Activated CD4-positive, alpha-beta T cell treated with anti-CD3 and anti-CD28 coated beads for 36 hours (primary cell): ENCODE measurements at regions of chr17 and their contacts with region 1.

Region 1: DNA sequence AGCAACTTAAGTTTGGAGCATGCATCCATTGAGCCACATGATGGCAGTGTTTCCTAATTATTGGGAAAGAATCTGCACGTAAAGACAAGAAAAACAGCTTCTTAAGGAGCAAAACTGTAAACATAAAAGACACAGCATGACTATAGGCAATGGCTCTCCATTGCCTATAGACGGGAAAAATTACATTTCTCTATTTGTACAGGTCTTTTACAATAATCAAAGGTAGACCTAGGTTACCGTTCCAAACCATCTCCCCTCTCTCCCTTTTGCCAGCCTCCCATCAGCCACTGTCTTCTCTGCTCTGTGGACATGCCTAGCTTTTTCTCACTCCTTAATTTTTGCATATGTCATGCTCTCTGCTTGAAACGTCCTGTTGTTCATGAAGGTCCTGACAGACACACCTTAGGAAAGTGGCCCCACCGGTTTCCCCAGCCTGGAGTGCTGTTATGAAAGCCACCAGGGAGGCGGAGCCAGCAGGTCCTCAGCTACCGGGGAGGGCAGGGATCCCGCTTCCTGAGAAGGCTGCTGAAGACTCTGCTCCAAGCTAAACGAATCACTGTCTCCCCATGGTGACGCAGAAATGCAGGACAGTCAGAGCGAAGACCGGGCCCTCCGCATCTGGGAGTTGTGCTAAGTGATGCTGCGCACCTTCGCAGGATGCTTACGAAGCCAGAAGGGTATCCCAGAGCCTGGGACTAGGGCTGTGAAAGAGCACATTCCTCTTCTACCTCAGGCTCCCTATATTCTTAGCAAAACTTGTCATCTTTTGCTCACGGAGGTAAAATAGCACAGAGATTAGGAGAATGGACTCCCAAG is 2.2 kb upstream of the SLC16A11 start:
- DNase-seq: peak; percentile 66
- ATAC-seq: peak; percentile 34
- H3K4me3 Mint-ChIP-seq: peak overlapping the region; percentile 68
- H3K27ac Mint-ChIP-seq: peak overlapping the region; percentile 59
- H3K4me1 Mint-ChIP-seq: peaks cover 37% of the 10 kb centered on the region
- H3K27me3 Mint-ChIP-seq: peaks cover 3% of the 10 kb centered on the region

Region 2: GRCh38 chr17:6187836-6188235 is 858.3 kb before region 1 on chr17:
- CTCF ChIA-PET with region 1: no interaction called
- POLR2A ChIA-PET with region 1: no interaction called
- intact Hi-C with region 1: no loop called
- DNase-seq: no peak
- ATAC-seq: no peak
- H3K4me3 Mint-ChIP-seq: no peak overlapping the region
- H3K27ac Mint-ChIP-seq: no peak overlapping the region
- H3K4me1 Mint-ChIP-seq: no peaks in the 10 kb centered on the region
- H3K27me3 Mint-ChIP-seq: peaks cover 14% of the 10 kb centered on the region

Region 3: DNA sequence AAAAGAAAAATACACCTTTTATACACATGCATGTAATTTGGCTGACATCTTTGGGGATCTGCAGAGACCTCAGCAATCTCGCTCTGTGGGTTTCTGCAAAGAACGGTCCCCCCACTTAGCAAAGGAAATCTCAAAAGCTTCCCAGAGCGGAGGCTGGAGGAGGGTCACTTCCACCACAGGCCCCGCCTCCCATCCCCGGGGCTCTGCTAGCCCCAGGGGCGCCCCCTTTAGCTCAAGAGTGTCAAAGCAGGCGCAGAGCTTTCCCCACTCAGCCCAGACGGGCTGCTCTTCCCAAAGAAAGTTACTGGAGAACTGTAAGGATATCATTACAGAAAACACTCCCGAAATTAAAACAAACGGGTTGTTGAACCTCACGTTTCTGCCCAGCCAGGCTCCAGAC is 344.4 kb before region 1 on chr17:
- CTCF ChIA-PET with region 1: no interaction called
- POLR2A ChIA-PET with region 1: no interaction called
- intact Hi-C with region 1: no loop called
- DNase-seq: peak; percentile 68
- ATAC-seq: peak; percentile 94
- H3K4me3 Mint-ChIP-seq: no peak overlapping the region
- H3K27ac Mint-ChIP-seq: no peak overlapping the region
- H3K4me1 Mint-ChIP-seq: no peaks in the 10 kb centered on the region
- H3K27me3 Mint-ChIP-seq: peaks cover 2% of the 10 kb centered on the region

Region 4: GRCh38 chr17:7035591-7036368 is 10.3 kb before region 1 on chr17 and contains the start of gene SLC16A13:
- CTCF ChIA-PET with region 1: interaction called, 28 read pairs
- POLR2A ChIA-PET with region 1: interaction called, 3 read pairs
- intact Hi-C with region 1: no loop called
- DNase-seq: peak; percentile 99
- ATAC-seq: peak; percentile 95
- H3K4me3 Mint-ChIP-seq: peak within 1 kb of the TSS; percentile 86
- H3K27ac Mint-ChIP-seq: peak within 1 kb of the TSS; percentile 96
- H3K4me1 Mint-ChIP-seq: peaks cover 45% of the 10 kb centered on the region
- H3K27me3 Mint-ChIP-seq: no peaks in the 10 kb centered on the region
- total RNA-seq, gene SLC16A13: 8.3 to 9.6 TPM

Region 5: DNA sequence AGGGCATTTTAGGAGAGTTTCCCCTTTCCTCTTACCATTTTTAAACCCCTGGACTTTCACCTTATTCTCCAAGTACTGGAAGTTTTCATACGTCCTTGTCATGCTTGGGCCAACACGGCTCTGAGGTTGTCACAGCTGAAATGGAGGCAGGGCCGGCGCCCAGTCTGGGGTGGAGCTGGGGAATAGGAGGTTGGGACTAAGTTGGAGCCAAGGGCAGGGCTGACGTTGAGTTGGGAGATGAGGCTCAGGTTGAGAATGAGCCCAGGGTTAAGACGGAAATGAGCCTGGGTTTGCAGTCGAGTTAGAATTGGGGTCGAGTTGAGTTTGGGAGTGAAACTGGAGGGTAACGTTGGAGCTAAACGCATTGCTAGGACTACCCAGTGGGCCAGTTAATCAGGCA is 32.6 kb after region 1 on chr17:
- CTCF ChIA-PET with region 1: no interaction called
- POLR2A ChIA-PET with region 1: no interaction called
- intact Hi-C with region 1: no loop called
- DNase-seq: no peak
- ATAC-seq: no peak
- H3K4me3 Mint-ChIP-seq: no peak overlapping the region
- H3K27ac Mint-ChIP-seq: peak overlapping the region; percentile 3
- H3K4me1 Mint-ChIP-seq: peaks cover 14% of the 10 kb centered on the region
- H3K27me3 Mint-ChIP-seq: no peaks in the 10 kb centered on the region

Region 6: GRCh38 chr17:7136266-7136877 is 90.3 kb after region 1 on chr17:
- CTCF ChIA-PET with region 1: interaction called, 136 read pairs
- POLR2A ChIA-PET with region 1: interaction called, 15 read pairs
- intact Hi-C with region 1: loop called (anchors 1 kb)
- DNase-seq: peak; percentile 89
- ATAC-seq: no peak
- H3K4me3 Mint-ChIP-seq: no peak overlapping the region
- H3K27ac Mint-ChIP-seq: no peak overlapping the region
- H3K4me1 Mint-ChIP-seq: peaks cover 21% of the 10 kb centered on the region
- H3K27me3 Mint-ChIP-seq: no peaks in the 10 kb centered on the region

Region 7: GRCh38 chr17:7177196-7177953 is 131.3 kb after region 1 on chr17:
- CTCF ChIA-PET with region 1: interaction called, 20 read pairs
- POLR2A ChIA-PET with region 1: no interaction called
- intact Hi-C with region 1: loop called (anchors 1 to 2 kb)
- DNase-seq: peak; percentile 82
- ATAC-seq: peak; percentile 82
- H3K4me3 Mint-ChIP-seq: peak overlapping the region; percentile 56
- H3K27ac Mint-ChIP-seq: no peak overlapping the region
- H3K4me1 Mint-ChIP-seq: peaks cover 11% of the 10 kb centered on the region
- H3K27me3 Mint-ChIP-seq: peaks cover 11% of the 10 kb centered on the region

Region 8: DNA sequence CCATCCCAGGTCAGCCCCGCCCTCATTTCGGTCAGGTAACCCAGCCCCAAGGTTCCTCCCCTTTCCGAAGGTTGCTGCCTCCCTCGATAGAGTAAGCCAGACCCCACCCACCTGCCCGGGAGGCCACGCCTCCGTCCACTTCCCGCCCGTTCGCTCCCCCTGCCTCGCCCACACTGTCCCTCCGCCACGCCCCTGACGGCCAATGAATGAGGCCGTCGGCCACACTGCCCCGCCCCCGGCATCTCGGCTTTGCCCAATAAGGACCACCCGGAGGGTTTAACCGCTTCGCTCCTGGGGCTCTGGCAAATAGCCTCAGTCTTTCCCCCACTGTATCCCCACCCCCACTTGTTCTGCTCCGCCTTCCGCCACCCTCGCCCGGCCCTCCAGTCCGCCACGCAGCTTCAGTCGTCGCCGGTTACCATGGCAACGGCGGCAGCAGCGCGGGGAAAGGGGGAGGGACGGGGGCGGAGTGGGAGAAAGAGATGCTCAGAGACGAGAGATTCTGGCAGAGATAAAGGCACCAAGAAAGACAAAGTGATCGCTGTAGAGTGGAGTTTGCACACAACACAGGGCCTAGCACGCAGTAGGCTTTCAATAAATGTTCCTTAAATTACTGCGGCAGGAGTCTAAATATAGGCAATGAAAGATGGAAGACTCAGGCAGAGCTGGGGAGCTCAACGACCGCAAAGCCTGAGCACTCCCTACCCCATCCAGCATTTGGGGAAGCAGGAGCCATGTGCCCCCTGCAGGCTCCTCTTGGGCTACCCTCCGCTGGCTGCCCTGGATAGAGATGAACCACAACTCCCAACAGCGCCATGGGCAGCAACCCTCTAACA is 168.4 kb after region 1 on chr17:
- CTCF ChIA-PET with region 1: interaction called, 7 read pairs
- POLR2A ChIA-PET with region 1: interaction called, 6 read pairs
- intact Hi-C with region 1: loop called in 1 of 2 experiments (anchors 2 kb)
- DNase-seq: peak; percentile 100
- ATAC-seq: peak; percentile 82
- H3K4me3 Mint-ChIP-seq: peak overlapping the region; percentile 81
- H3K27ac Mint-ChIP-seq: peak overlapping the region; percentile 93
- H3K4me1 Mint-ChIP-seq: peaks cover 71% of the 10 kb centered on the region
- H3K27me3 Mint-ChIP-seq: peaks cover 7% of the 10 kb centered on the region

Region 9: DNA sequence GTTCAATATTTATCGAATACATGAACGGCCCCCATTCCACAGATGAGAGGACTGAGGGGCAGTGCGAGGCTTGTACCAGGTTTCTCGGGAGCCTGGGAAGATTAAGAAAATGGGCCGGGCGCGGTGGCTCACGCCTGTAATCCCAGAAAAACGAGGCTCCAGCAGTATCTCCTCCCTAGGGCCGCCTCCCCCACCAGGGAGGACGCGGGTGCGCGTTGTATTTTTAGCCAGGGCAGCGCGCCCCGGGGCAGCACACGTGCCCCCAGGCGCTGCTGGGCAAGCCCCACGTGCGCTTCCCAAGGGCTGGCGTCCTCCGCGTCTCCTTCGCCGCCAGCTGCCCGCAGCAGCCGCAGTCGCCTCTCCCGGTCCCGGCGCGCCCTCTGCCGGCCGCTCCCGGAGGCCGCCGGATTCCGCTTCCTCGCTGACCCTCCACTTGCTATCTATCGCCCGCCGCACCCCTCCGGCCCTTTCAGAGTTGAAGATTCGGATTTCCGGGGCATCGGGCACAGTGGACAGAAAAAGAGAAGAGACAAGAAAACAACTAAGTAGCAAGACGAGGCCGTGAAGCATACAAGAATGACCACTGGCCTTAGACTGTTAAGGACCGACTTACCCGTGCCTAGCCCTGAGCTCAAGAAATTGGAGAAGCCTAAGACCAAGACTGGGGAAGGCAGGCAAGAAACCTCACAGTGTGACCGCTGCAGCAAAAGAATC is 250.2 kb after region 1 on chr17:
- CTCF ChIA-PET with region 1: interaction called, 21 read pairs
- POLR2A ChIA-PET with region 1: interaction called, 3 read pairs
- intact Hi-C with region 1: loop called (anchors 1 to 2 kb)
- DNase-seq: peak; percentile 83
- ATAC-seq: peak; percentile 38
- H3K4me3 Mint-ChIP-seq: peak overlapping the region; percentile 35
- H3K27ac Mint-ChIP-seq: no peak overlapping the region
- H3K4me1 Mint-ChIP-seq: peaks cover 23% of the 10 kb centered on the region
- H3K27me3 Mint-ChIP-seq: peaks cover 19% of the 10 kb centered on the region

Region 10: DNA sequence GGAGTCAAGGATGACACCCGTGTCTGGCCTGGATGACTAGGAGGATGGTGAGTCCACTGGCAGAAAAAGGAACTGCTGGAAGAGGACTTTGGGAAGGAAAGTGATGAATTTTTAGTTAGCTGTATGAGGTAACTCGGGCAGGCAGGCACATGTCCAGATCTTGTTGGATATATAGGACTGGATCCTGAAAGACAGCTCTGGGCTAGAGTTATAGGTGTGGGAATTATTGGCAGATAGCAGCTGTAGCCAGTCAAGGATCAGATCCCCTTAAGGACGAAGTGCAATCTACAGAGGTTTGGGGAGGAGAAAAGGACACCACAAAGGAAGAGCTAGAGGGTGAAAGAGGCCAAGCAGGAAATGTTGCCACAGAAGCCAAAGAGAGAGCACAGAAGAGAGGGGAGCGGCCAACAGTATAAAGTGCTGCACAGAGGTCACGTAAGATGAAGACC is 821.8 kb after region 1 on chr17:
- CTCF ChIA-PET with region 1: no interaction called
- POLR2A ChIA-PET with region 1: no interaction called
- intact Hi-C with region 1: no loop called
- DNase-seq: no peak
- ATAC-seq: peak; percentile 53
- H3K4me3 Mint-ChIP-seq: no peak overlapping the region
- H3K27ac Mint-ChIP-seq: peak overlapping the region; percentile 49
- H3K4me1 Mint-ChIP-seq: peaks cover 23% of the 10 kb centered on the region
- H3K27me3 Mint-ChIP-seq: no peaks in the 10 kb centered on the region